Dendritic cell treated with granulocyte-macrophage colony-stimulating factor and Interleukin-4, amounts not matched to agents 40 ng/mL and 50 ng/mL, for 4 days (primary cell): ENCODE measurements at regions of chr3 and their contacts with region 1.

Region 1: DNA sequence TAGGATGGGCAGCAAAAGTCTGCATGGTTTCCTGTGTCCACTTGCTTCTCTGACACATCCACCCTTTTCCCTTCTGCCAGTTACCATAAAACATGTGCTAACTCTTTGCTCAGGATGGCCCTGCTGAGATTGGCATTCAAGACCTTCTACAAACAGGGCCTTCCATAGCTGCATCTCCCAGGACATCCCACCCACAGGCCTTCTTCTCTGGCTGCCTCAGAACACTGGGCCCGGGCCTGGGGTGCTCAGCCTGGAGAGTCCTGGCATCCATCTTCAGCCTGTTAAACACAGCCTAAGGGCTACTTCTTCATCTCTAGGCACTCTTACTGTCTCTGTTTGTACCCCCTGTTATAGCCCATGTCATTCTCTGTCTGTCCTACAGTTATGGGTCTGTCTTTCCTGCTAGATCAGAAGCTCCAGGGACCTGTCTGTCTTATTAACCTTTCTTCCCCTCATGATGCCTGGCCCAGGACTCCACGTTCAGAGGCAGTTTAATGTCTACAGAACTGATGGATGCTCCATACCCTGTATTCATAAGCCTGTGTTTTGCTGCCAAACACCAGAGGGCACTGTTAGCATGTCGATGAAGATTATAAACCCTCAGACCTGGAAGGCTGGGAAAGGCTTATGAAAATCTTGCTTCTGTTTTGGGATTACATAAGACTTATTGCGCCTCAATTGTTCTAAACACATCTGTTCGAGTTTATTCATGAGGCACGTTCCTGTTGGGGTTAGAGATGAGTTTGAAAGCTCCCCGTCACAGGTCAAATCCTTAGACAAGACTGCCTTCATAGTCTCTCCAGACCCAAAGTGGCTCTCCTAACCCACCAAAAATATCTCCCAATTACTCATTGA is 16.5 kb downstream of the SEMA3G start:
- H3K4me3 Mint-ChIP-seq: no peak overlapping the region
- H3K27ac Mint-ChIP-seq: no peak overlapping the region
- H3K4me1 Mint-ChIP-seq: peaks cover 21% of the 10 kb centered on the region
- H3K27me3 Mint-ChIP-seq: peaks cover 1% of the 10 kb centered on the region

Region 2: GRCh38 chr3:52253314-52254304 is 174.8 kb before region 1 on chr3:
- intact Hi-C with region 1: no loop called
- H3K4me3 Mint-ChIP-seq: peak overlapping the region; percentile 55
- H3K27ac Mint-ChIP-seq: peak overlapping the region; percentile 96
- H3K4me1 Mint-ChIP-seq: peaks cover 92% of the 10 kb centered on the region
- H3K27me3 Mint-ChIP-seq: no peaks in the 10 kb centered on the region

Region 3: DNA sequence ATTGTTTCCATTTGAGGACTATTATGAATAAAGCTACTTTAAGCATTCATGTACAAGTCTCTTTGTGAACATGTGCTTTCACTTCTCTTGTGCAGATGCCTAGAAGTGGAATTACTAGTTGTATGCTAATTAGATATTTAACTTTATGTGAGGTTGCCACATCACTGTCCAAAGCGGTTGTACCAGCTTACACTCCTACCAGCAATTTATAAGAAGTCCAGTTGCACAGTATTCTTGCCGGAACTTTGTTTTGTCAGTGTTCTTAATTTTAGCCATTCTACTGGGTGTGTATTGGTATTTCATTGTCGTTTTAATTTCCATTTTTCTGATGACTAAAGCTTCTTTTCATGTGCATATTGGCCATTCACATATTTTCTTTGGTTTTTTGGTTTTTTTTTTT is 12.6 kb before region 1 on chr3:
- intact Hi-C with region 1: no loop called
- H3K4me3 Mint-ChIP-seq: no peak overlapping the region
- H3K27ac Mint-ChIP-seq: no peak overlapping the region
- H3K4me1 Mint-ChIP-seq: peaks cover 41% of the 10 kb centered on the region
- H3K27me3 Mint-ChIP-seq: no peaks in the 10 kb centered on the region

Region 4: GRCh38 chr3:52446631-52447511 is 18.5 kb after region 1 on chr3:
- intact Hi-C with region 1: loop called (anchors 1 kb)
- H3K4me3 Mint-ChIP-seq: no peak overlapping the region
- H3K27ac Mint-ChIP-seq: no peak overlapping the region
- H3K4me1 Mint-ChIP-seq: peaks cover 32% of the 10 kb centered on the region
- H3K27me3 Mint-ChIP-seq: peaks cover 29% of the 10 kb centered on the region